ENCODE measurements at regions of chr10 and their contacts with region 1.

Region 1: DNA sequence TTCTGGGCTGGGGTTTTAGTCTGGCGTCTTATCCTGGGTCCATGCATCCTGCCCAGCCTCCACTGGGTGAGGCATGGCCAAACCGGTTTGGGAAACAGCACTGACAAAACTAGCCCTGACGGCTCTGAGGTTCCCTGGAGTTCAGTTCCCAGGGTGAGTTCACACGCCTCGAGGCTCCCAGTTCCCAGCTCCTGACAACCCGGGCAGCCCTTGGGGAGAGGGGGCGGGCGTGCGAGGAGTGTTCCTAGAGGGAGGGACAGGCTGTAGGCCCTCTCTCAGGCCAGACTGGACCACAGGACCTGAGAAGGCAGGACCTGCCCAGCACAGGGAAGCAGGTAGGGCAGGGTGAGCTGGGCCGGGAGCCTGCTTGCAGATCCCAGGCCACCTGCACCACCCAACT is 82.3 kb upstream of the PPIF start:
- DNase-seq: no peak
- ATAC-seq: peak; percentile 17

Region 2: DNA sequence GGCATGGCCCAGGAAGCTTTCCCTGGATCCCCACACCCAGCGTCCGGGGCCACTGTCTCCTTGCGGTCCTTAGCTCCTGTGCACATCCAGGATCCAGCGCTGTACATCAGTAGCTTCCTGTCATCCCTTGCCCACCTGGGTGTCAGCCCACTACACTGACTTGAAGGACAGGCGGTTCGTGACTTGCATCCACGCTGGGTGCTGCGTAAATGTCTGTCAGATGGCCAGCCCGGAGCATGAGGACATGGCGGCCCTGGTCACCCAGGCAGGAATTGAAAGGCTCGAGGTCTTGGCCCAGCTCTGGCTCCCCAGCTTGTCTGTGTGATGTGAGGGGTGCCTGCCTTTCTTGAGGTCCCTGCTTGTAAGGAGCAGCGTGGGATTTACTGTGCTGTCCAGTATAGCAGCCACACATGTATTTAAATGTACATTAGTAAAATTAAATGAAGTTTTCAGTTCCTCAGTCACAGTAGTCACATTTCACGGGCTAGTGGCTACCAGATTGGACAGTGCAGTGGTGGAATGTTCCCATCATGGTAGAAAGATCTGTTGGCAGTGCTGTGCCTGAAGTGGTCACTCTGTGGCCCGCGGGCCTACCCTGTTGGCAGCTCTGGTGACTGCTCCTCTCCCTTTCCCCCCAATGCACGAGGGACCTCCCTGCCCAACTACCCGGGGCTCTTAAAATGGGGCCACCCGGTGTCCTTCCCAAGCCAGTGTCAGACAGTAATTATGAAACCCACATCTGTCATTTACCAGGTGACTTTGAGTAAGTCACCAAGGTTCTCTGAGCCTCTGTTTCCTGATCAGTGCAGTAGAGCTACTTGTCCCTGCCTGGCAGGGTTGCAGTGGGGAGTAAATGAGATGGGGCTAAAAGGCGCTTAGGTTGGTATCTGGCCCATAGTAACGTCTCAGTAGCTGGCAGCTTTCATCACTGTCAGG is 15.5 kb before region 1 on chr10:
- intact Hi-C with region 1: loop called (anchors 2 kb)
- DNase-seq: no peak
- ATAC-seq: no peak